Colonic mucosa (tissue), 4 donors: ENCODE measurements at regions of chr10 and their contacts with region 1.

Region 1: DNA sequence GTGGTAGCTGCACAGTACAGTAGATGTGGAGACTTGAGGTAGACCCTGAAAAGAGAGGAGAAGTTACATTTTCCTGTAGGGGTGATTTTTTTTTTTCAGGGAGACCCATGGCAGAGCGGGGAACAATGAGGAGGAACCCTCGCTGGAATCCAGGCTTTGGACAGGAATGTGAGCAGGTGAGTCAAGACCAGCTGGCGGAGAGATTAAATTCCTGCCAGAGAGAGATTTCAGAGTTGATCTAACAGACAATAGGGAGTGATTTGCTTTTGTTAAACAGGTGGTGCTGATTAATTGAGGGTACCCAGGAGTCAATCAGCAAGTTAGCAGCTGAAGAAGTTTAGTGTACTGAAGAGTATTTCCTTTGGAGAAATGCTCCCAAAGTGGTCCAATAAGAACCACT is 41.6 kb upstream of the MINDY3 start:
- DNase-seq: no peak
- H3K4me3 ChIP-seq: no peak overlapping the region
- H3K27ac ChIP-seq: no peak overlapping the region
- H3K4me1 ChIP-seq: no peaks in the 10 kb centered on the region
- H3K27me3 ChIP-seq: no peaks in the 10 kb centered on the region
- CTCF ChIP-seq: no peak

Region 2: DNA sequence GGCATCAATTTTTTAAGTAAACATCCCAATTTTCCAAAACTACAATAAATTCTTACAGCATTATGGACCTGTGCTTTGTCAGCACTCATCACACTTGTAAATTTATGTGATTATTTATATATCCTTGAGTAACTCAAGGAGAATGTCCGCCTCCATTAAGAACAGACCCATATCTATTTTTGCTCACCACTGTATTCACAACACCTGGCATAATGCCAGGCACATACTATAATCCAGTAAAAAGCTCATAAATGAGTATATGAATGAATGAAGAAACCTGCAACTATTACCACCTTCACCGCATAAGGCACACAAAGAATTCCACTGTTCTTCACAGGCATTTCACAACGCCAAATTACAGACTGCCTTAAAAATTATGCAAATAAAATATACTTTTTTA is 88.5 kb before region 1 on chr10:
- intact Hi-C with region 1: no loop called
- DNase-seq: no peak
- H3K4me3 ChIP-seq: no peak overlapping the region
- H3K27ac ChIP-seq: no peak overlapping the region
- H3K4me1 ChIP-seq: no peaks in the 10 kb centered on the region
- H3K27me3 ChIP-seq: no peaks in the 10 kb centered on the region
- CTCF ChIP-seq: no peak

Region 3: DNA sequence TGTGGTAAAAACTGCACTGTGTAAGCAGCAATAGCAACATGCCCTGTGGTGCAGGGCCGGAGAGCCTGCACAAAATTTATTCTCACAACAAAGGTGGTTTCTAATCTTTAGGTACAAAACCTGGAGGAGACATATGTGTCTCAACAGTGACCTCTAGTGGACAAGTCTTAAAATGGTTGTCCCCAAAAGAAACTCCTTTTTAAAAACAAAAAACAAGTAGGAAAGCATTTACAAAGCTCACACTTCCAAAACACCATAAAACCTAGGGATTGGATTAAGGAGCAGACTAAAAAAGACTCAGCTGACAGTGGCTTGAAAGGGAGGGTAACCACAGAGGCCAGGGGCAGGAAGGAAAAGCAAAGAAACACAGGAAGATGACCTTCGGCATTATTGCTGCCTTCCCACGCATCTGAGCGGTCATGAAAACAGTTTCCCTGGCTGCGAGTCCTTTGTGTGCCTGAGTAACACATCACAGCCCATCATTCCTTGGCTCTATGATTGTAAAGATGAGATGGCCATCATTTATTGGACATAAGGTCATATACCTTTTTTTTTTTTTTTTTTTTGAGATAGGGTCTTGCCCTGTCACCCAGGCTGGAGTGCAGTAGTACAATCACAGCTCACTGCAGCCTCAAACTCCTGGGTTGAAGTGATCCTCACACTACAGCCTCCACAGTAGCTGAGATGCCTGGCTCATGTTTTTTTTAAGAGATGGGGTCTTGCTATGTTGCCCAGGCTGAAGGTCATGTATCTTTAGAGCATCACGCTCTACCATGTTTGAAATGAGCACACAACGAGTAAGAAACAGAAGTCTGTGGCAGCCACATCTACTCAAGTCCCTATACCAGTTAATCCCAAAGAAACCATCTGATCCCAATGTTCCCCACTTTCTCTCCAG is 875.8 kb after region 1 on chr10:
- intact Hi-C with region 1: loop called (anchors 10 kb)
- DNase-seq: no peak
- H3K4me3 ChIP-seq: no peak overlapping the region
- H3K27ac ChIP-seq: peak overlapping the region; percentile 3
- H3K4me1 ChIP-seq: no peaks in the 10 kb centered on the region
- H3K27me3 ChIP-seq: no peaks in the 10 kb centered on the region
- CTCF ChIP-seq: peak; percentile 85